CD8-positive, alpha-beta T cell (primary cell): ENCODE measurements at regions of chr10 and their contacts with region 1.

Region 1: DNA sequence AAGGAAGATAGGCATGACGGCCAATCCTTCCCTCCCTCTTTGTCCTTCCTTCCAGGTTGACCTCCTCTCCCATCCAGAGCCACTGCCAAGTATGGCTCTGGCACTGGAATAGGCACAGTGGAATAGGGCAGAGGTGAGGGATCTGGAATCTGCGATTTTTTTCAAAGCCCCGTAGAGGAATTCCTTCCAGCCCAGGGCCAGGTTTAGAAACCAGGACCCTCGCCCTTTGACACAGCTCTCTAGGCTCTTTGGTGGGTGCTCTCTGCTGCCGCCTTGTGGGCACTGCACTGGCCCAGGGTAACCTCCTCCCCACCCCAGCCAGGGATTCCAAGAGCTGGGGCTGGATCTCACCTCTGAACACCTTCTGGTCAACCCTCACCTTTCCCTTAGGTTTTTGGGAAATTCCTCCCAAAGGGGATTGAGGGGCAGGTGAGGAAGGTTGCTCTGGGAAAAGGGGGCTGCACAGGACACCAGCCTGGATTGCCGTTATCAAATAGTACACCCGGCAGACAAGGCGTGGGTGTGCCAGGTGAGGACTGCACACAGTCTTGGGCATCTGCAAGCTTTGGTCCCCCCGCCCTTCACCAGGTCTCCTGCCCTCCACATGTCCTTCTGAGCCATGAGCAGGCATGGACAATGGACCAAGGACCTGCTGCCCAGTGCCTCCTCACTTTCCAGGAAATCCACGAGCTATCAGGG is 22.8 kb downstream of the C10orf105 start:
- DNase-seq: peak; percentile 43 to 81 (median 70)
- ATAC-seq: peak; percentile 61
- H3K4me3 ChIP-seq: no peak overlapping the region
- H3K4me3 Mint-ChIP-seq: no peak overlapping the region
- H3K27ac ChIP-seq: no peak overlapping the region
- H3K27ac Mint-ChIP-seq: no peak overlapping the region
- H3K4me1 ChIP-seq: peaks cover 49% of the 10 kb centered on the region
- H3K4me1 Mint-ChIP-seq: peaks cover 49% of the 10 kb centered on the region
- H3K27me3 ChIP-seq: no peaks in the 10 kb centered on the region
- H3K27me3 Mint-ChIP-seq: no peaks in the 10 kb centered on the region
- CTCF ChIP-seq: peak; percentile 71

Region 2: DNA sequence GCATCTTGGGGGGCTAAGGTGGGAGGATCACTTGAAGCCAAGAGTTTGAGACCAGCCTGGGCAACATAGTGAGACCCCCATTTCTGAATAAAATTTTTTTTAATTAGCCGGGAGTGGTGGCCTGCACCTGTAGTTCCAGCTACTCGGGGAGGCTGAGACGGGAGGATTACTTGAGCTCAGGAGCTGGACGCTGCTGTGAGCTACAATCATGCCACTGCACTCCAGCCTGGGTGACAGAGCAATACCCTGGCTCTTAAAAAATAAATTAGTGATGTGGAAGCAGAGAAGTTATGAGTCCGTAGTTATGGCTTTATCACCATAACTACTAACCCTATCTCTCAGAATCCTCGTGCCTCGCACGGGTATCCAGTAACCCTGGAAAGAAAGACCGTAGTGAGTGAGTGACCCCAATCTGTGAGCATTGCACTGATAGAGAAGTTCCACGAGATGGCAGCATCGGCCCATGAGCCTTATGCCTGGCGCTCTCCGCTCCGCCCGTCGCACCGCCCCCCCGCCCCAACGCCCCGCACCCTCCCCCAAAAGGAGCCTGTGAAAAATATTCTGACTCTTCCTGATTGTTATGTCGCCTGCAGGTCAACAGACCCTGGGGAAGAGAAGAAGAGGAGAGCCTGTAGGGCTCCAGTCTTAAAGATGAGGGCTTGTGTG is 382.6 kb before region 1 on chr10:
- CTCF ChIA-PET with region 1: interaction called, 18 read pairs
- POLR2A ChIA-PET with region 1: no interaction called
- intact Hi-C with region 1: loop called in 1 of 2 experiments (anchors 1 kb)
- DNase-seq: peak in 8 of 9 experiments; percentile 41 to 80 (median 62)
- ATAC-seq: peak; percentile 45
- H3K4me3 ChIP-seq: no peak overlapping the region
- H3K4me3 Mint-ChIP-seq: no peak overlapping the region
- H3K27ac ChIP-seq: no peak overlapping the region
- H3K27ac Mint-ChIP-seq: no peak overlapping the region
- H3K4me1 ChIP-seq: peaks cover 6% of the 10 kb centered on the region
- H3K4me1 Mint-ChIP-seq: peaks cover 11% of the 10 kb centered on the region
- H3K27me3 ChIP-seq: no peaks in the 10 kb centered on the region
- H3K27me3 Mint-ChIP-seq: peaks cover 7% of the 10 kb centered on the region
- CTCF ChIP-seq: peak; percentile 86

Region 3: DNA sequence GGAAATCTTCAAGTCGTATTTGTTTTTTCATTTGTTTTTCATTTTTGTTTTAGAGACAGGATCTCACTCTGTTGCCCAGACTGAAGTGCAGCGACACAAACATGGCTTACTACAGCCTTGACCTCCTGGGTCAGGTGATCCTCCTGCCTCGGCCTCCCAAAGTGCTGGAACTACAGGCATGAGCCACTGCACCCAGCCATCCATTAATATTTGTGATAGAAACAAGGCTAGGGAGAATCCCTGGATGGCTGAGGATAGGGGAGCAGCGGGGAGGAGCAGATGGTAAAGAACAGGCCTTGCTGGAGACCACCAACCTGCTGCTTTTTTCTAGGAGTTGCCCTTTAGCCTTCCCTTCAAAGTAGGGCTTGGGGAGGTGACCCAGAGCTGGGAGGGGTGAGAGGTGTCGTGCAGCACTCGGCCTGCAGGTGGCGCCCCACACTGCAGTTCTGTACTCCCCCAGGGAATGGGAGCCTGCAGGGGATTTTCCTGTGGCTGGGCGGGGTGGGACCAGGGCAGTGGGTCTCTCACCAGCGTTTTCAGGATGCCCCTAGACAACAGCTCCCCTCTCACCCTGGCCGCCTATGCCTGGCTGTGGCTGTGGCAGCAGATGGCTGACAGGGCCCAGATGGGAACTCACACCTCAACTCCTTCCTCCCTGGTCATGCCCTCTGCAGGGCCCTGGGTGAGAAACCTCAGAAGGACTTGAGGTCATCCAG is 312.6 kb before region 1 on chr10:
- CTCF ChIA-PET with region 1: interaction called, 11 read pairs
- POLR2A ChIA-PET with region 1: no interaction called
- intact Hi-C with region 1: no loop called
- DNase-seq: peak; percentile 56 to 83 (median 76)
- ATAC-seq: peak; percentile 89
- H3K4me3 ChIP-seq: no peak overlapping the region
- H3K4me3 Mint-ChIP-seq: no peak overlapping the region
- H3K27ac ChIP-seq: no peak overlapping the region
- H3K27ac Mint-ChIP-seq: no peak overlapping the region
- H3K4me1 ChIP-seq: no peaks in the 10 kb centered on the region
- H3K4me1 Mint-ChIP-seq: no peaks in the 10 kb centered on the region
- H3K27me3 ChIP-seq: peaks cover 0 to 3% of the 10 kb centered on the region in 2 experiments
- H3K27me3 Mint-ChIP-seq: no peaks in the 10 kb centered on the region
- CTCF ChIP-seq: peak; percentile 83

Region 4: DNA sequence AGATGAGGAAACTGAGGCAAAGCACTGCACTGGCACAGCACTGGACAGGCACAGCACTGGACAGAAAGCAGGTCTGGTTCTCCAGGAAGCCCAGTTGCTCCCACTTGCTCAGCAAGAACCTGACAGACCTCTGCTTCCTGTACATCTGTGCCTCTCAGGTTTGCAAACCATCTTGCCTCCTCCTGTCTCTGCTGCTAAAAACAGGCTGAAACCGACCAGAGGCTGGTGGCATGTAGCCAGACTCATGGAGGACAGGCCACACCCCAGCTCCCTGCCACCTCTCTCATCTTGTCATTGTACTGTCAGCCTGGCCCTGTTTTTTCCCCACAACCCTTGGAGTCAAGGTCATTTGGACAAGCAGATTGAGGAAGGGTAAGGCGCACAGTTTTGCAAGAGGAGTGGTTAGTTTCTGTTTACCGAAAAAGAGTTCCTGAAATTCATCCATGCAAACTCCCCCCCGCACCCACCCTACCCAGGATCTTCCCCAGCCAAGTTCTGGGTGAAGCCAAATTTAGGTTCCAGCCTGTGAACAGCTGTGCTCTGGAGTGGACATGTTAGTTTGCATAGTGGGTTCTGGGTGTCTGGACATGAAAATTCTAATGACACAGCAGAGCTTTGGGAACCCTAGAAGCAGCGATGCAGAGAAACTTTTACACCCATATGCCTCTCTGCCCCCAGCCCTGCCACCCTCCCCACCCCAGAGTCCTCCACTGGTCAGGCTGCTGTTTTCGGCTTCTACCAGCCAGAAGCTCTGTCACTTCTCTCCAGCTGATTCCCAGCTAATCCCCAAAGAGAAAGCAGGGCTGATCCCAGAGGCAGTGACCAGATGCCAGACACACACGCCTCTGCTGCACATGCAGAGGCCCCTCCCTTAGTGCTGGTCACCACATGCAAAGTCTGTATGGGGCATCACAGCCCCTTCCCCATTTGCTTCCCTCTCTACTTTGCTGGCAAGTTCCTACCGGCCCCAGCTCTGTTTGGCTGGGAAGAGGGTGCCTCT is 31.3 kb after region 1 on chr10:
- CTCF ChIA-PET with region 1: interaction called, 16 read pairs
- POLR2A ChIA-PET with region 1: interaction called, 6 read pairs
- intact Hi-C with region 1: no loop called
- DNase-seq: peak; percentile 58 to 93 (median 78)
- ATAC-seq: peak; percentile 60
- H3K4me3 ChIP-seq: peak overlapping the region; percentile 16 to 18
- H3K4me3 Mint-ChIP-seq: peak overlapping the region; percentile 58
- H3K27ac ChIP-seq: peak overlapping the region; percentile 75 to 86
- H3K27ac Mint-ChIP-seq: peak overlapping the region; percentile 98
- H3K4me1 ChIP-seq: peaks cover 93% of the 10 kb centered on the region
- H3K4me1 Mint-ChIP-seq: peaks cover 86% of the 10 kb centered on the region
- H3K27me3 ChIP-seq: no peaks in the 10 kb centered on the region
- H3K27me3 Mint-ChIP-seq: no peaks in the 10 kb centered on the region
- CTCF ChIP-seq: no peak

Region 5: DNA sequence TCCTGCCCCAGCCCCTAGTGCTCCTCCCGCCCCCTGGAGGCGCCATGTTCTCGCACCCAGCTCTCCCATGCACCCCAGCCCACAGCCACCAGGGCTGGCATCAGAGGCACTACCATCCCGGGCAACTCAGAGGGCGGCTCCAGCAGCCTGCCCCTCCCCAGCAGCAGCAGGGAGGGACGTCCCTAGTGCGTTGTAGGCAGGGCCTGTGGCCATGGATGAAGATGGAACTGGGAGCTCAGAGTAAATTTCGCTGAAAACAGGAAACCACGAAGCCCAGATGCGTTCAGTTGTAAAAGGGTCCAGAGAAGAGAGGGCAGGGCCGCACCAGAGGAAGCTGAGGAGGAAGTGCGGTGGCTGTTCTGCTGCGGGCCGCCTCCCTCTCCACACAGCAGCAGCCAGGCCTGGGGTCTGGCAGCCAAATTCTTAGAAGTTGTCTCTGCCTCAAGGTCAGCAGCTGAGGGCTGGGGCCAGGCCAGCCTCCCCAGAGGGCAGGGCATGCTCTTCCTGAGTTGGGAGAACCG is 52.0 kb after region 1 on chr10:
- CTCF ChIA-PET with region 1: interaction called, 14 read pairs
- POLR2A ChIA-PET with region 1: interaction called, 6 read pairs
- intact Hi-C with region 1: loop called in 1 of 2 experiments (anchors 5 kb)
- DNase-seq: peak; percentile 57 to 93 (median 78)
- ATAC-seq: peak; percentile 88
- H3K4me3 ChIP-seq: peak overlapping the region in 1 of 2 experiments; percentile 27
- H3K4me3 Mint-ChIP-seq: peak overlapping the region; percentile 74
- H3K27ac ChIP-seq: peak overlapping the region; percentile 57 to 82
- H3K27ac Mint-ChIP-seq: peak overlapping the region; percentile 93
- H3K4me1 ChIP-seq: peaks cover 100% of the 10 kb centered on the region
- H3K4me1 Mint-ChIP-seq: peaks cover 96% of the 10 kb centered on the region
- H3K27me3 ChIP-seq: no peaks in the 10 kb centered on the region
- H3K27me3 Mint-ChIP-seq: no peaks in the 10 kb centered on the region
- CTCF ChIP-seq: no peak

Region 6: DNA sequence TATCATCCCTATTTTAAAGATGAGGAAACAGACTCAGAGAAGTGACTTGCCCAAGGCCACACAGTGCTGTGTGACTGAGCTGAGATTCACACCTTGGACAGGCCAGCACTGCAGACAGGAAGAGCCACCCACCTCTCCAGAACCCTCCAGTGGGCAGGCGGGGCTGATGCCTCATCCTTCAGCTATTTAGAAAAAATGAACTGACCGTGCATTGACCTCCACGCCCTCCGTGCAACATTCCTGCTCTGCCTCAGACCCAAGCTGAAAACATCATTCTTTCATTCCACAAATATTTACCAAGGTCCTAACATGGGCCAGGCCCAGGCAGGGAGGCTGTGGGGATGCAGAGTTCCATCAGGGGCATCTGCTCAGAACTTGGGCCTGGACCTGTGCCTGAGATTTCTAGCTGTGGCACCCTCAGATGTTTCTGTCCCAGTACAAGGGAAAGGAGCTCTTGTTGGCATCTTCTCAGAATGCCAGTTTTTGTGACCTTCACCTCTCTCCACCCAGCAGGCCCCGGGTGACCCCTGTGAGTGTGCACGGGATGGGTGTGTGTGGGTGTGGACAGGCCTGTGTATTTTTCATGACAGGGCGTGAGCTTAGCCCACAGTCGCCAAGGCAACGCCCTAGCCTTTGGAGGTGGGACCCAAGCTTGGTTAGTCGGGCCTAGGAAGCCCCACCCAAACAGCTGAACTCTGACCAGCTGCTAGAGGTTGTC is 70.1 kb after region 1 on chr10:
- CTCF ChIA-PET with region 1: interaction called, 242 read pairs
- POLR2A ChIA-PET with region 1: interaction called, 17 read pairs
- intact Hi-C with region 1: no loop called
- DNase-seq: peak in 3 of 9 experiments; percentile 55 to 64 (median 57)
- ATAC-seq: no peak
- H3K4me3 ChIP-seq: peak overlapping the region in 1 of 2 experiments; percentile 13
- H3K4me3 Mint-ChIP-seq: peak overlapping the region; percentile 70
- H3K27ac ChIP-seq: peak overlapping the region; percentile 17 to 89
- H3K27ac Mint-ChIP-seq: peak overlapping the region; percentile 96
- H3K4me1 ChIP-seq: peaks cover 92% of the 10 kb centered on the region
- H3K4me1 Mint-ChIP-seq: peaks cover 93% of the 10 kb centered on the region
- H3K27me3 ChIP-seq: no peaks in the 10 kb centered on the region
- H3K27me3 Mint-ChIP-seq: no peaks in the 10 kb centered on the region
- CTCF ChIP-seq: no peak

Region 7: GRCh38 chr10:71812016-71812912 is 115.5 kb after region 1 on chr10:
- CTCF ChIA-PET with region 1: interaction called, 16 read pairs
- POLR2A ChIA-PET with region 1: no interaction called
- intact Hi-C with region 1: loop called in 1 of 2 experiments (anchors 1 kb)
- DNase-seq: peak; percentile 63 to 91 (median 79)
- ATAC-seq: peak; percentile 91
- H3K4me3 ChIP-seq: no peak overlapping the region
- H3K4me3 Mint-ChIP-seq: no peak overlapping the region
- H3K27ac ChIP-seq: no peak overlapping the region
- H3K27ac Mint-ChIP-seq: no peak overlapping the region
- H3K4me1 ChIP-seq: peaks cover 4% of the 10 kb centered on the region
- H3K4me1 Mint-ChIP-seq: peaks cover 2% of the 10 kb centered on the region
- H3K27me3 ChIP-seq: no peaks in the 10 kb centered on the region
- H3K27me3 Mint-ChIP-seq: no peaks in the 10 kb centered on the region
- CTCF ChIP-seq: peak; percentile 79